MCF 10A (cell line): ENCODE measurements at regions of chr11 and their contacts with region 1.

Region 1: DNA sequence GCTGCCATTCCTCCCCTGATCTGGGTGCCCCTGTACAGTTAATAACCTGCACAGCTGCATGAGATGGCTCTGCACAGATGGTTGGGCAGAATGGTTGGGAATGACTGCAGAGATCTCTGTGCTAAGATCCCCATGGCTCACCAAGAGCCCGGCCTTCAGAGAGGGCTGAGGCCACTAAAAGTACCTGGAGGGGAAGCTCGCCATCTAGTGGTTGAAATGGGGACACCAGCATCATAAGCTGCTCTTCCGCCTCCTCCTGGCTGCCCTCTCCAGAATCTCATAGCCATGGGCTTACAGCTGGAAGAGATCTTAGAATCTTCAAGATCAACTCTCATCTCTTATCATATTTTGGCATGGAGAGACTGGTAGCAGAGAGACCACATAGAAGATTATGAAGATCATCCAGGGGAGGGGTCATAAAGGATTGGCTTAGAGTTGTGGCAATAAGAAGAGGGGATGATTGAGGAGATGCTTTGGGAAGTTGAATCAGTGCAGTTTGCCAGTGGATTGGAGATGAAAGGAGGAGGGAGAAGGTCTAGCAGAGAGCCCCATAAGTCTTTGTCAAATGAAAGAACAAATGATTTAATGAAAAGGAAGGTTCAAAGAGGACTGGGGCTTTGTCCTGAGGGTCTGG is 22.0 kb upstream of the TLCD5 start:
- DNase-seq: peak; percentile 86
- H3K4me3 Mint-ChIP-seq: no peak overlapping the region
- H3K27ac Mint-ChIP-seq: peak overlapping the region; percentile 55
- H3K4me1 Mint-ChIP-seq: peaks cover 22% of the 10 kb centered on the region
- H3K27me3 Mint-ChIP-seq: peaks cover 5% of the 10 kb centered on the region
- CTCF ChIP-seq: peak; percentile 88

Region 2: GRCh38 chr11:120172054-120172911 is 130.8 kb before region 1 on chr11:
- CTCF ChIA-PET with region 1: interaction called, 52 read pairs
- POLR2A ChIA-PET with region 1: interaction called, 4 read pairs
- intact Hi-C with region 1: loop called (anchors 1 kb)
- DNase-seq: peak; percentile 70
- H3K4me3 Mint-ChIP-seq: no peak overlapping the region
- H3K27ac Mint-ChIP-seq: no peak overlapping the region
- H3K4me1 Mint-ChIP-seq: no peaks in the 10 kb centered on the region
- H3K27me3 Mint-ChIP-seq: peaks cover 58% of the 10 kb centered on the region
- CTCF ChIP-seq: peak; percentile 87

Region 3: DNA sequence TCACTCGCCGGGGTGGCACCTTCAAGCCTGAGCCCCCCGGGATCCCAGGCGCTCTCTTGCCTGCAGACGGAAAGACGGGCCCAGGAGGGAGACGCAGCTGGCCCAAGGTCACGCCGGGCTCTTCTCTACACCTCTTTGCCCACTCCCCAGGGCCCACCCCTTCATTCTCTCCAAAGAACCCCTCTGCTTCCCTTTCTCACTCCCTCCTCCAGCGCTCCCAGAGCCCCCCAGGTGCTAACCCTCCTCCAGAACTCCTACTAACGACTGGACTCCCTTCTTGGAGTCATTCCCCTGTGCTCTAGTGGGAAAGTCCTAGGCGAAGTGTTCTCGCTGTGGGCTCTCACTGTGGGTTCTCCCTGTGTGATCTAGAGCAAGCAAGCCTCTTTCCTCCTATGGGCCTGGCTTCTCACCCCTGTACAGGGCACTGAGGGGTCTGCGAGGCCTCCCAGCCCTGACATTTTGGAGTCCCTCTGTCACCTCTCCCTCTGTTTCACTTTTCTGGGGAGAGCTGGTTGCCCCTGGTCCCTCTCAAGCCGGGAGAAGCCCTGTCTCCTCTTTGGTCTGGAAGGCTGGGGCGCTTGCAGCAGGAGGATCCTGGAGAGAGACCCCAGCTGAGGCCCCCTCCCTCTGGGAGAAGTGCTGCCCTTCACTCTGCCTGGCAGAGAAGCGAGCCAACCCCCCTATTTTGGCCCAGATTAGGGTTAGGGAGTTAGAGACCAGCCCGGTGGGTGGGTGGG is 91.4 kb before region 1 on chr11:
- CTCF ChIA-PET with region 1: interaction called, 10 read pairs
- POLR2A ChIA-PET with region 1: interaction called, 3 read pairs
- intact Hi-C with region 1: no loop called
- DNase-seq: peak; percentile 27
- H3K4me3 Mint-ChIP-seq: peak overlapping the region; percentile 80
- H3K27ac Mint-ChIP-seq: peak overlapping the region; percentile 25
- H3K4me1 Mint-ChIP-seq: peaks cover 38% of the 10 kb centered on the region
- H3K27me3 Mint-ChIP-seq: no peaks in the 10 kb centered on the region
- CTCF ChIP-seq: no peak

Region 4: DNA sequence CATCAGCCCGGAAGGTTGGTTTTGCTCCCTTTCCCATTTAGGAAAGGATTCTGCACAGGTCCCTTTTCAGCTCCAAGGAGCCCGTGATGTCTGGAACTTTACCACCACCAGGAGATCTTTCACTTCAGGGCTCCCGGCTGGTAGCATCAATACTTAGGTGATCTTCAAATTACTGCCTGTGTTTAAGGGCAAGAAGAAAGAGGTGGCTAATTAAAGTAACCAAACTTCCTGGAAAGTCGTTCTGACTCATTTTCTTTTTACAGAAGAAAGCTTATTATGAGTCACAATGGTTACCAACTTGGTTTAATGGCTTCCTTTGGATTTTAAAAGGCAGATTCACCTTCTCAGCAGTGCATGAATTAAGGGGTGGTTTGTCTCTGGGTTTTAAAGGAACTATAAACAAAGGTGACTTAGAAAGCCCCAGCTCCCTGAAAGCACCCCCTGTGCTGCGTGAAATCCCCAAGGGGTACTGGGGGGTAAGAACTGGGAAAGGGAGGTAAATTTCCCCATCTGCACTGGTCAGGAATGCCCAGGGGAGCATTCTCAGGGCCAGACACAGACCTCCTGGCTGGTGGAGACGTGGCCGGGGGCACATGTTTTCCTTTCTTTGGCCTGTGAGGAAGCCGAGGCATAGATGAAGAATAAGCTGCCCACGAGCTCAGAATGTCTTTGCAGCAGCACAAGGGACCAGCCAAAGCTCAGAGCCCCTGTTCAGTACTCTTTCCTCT is 54.4 kb before region 1 on chr11:
- CTCF ChIA-PET with region 1: interaction called, 136 read pairs
- POLR2A ChIA-PET with region 1: interaction called, 3 read pairs
- intact Hi-C with region 1: no loop called
- DNase-seq: peak; percentile 53
- H3K4me3 Mint-ChIP-seq: no peak overlapping the region
- H3K27ac Mint-ChIP-seq: no peak overlapping the region
- H3K4me1 Mint-ChIP-seq: no peaks in the 10 kb centered on the region
- H3K27me3 Mint-ChIP-seq: peaks cover 9% of the 10 kb centered on the region
- CTCF ChIP-seq: no peak

Region 5: DNA sequence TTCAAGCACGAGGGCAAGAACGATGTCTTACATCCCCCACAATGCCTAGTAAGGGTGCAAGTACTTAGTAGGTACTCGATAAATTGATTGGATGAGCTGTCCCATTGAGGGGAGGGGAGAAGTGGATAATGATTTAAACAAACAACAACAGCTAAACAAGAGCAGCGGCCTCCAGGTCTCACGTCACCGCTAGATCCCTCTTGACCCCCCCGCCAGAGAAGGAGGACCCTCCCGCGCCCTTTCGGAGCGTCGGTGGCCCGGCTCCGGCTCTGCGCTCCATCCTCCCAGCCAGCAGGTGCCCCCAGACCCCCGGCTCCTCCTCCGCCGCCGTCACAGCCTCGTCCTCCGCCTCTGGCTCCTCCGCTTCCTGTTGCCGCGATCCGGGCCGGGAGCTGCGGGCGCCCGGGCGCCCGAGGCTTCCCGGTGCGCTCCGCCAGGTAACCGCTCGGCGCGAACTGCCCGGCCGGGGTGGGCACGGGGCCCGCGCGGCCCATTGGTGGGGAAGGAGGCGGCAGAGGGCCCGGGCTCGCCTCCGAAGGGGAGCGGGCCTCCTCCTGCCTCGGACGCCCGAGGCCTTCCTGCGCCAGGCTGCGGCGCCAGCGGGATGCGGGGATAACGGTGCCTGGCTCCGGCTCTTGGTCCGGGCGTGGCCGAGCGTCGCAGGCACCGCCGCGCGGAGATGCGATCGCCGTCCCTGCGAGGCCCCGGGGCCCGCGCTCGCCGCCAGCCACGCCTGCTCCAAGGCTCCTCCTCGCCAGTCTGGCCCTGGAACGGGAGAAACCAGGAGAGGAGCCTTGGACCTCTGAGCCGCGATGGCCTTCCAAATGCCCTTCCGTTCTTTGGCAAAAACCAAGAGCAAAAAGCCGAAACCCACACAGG is 22.1 kb after region 1 on chr11 and contains the start of gene TLCD5:
- CTCF ChIA-PET with region 1: interaction called, 12 read pairs
- POLR2A ChIA-PET with region 1: interaction called, 13 read pairs
- intact Hi-C with region 1: loop called (anchors 1 kb)
- DNase-seq: peak; percentile 55
- H3K4me3 Mint-ChIP-seq: peak within 1 kb of the TSS; percentile 73
- H3K27ac Mint-ChIP-seq: peak within 1 kb of the TSS; percentile 60
- H3K4me1 Mint-ChIP-seq: peaks cover 13% of the 10 kb centered on the region
- H3K27me3 Mint-ChIP-seq: no peaks in the 10 kb centered on the region
- CTCF ChIP-seq: no peak
- total RNA-seq, gene TLCD5: 9.6 and 13.0 TPM in 2 replicates

Region 6: DNA sequence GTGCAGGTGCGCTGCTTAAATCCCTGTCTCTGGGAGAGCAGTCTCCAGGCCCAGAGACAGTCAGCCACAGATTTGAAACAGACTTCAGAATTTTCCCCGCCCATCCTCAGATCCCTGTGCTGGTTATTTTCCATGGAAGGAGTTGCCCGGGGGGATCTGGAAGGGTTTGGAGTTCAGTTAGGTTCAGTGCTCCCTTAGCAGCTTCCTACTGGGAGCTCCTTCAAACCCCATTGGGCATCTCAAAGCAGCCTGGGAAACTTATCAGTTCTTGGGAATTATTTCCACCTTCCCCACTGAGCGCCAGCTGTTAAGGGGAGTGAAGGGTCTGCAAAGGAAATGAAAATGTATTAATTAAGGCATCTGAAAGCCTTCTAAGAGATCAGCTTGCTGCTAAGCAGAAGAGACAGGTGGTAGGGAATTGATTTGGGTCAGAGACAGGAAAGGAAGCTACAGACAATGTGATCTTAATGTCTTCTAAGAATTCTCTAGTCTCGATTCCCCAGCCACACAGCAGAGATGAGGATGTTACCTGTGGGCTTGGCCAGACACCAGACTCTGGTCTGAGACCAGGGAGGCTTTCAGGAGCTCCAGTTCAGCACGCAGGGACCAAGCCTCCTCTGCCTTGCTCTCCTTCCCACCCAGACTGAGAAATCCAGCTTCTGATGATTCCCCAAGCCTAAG is 614.6 kb after region 1 on chr11:
- CTCF ChIA-PET with region 1: no interaction called
- POLR2A ChIA-PET with region 1: no interaction called
- intact Hi-C with region 1: no loop called
- DNase-seq: no peak
- H3K4me3 Mint-ChIP-seq: no peak overlapping the region
- H3K27ac Mint-ChIP-seq: no peak overlapping the region
- H3K4me1 Mint-ChIP-seq: no peaks in the 10 kb centered on the region
- H3K27me3 Mint-ChIP-seq: peaks cover 77% of the 10 kb centered on the region
- CTCF ChIP-seq: no peak